ENCODE measurements at regions of chr14 and their contacts with region 1.

Region 1: DNA sequence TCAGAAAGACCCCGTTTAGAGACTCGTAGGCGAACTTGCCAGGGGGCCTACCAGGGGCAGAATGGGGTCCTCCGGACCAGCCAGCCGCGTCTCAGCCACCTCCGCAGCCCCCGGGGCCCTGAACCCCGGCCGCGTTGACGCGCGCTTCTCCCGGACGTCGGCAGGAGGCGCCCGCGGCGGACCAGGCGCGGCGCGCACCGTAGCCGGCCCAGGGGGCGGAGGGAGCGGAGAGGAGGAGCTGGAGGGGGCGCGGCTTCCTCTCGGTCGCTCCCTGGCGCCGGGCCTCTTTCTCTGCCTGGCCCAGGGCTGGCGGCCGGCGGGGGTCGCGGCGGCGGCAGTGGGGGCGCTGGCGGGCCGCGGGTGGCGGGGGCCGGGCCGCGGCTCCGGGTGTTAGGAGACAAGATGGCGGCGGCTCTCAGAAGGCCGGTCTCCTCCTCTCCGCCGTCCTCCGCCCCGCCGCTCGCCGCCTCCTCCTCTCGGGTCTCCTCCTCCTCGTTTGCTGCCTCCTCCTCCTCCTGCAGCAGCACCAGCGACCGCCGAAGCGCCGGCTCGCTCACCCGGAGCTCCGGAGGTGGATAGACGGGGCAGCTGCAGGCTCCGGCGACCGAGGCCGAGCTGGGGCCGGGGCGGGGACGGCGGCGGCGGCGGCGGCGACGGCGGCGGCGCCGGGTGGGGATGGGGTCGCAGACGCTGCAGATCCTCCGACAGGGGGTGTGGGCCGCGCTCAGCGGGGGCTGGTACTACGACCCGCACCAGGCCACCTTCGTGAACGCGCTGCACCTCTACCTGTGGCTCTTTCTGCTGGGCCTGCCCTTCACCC is at the start of gene PCNX1:
- DNase-seq: peak; percentile 95
- ATAC-seq: peak; percentile 82
- H3K4me3 ChIP-seq: peak within 1 kb of the TSS; percentile 76 to 92 (median 84)
- H3K4me3 Mint-ChIP-seq: peak within 1 kb of the TSS; percentile 82
- H3K27ac ChIP-seq: peak within 1 kb of the TSS; percentile 87 to 95
- H3K27ac Mint-ChIP-seq: peak within 1 kb of the TSS; percentile 87
- H3K4me1 ChIP-seq: peaks cover 22 to 25% of the 10 kb centered on the region in 2 donors
- H3K4me1 Mint-ChIP-seq: peaks cover 33% of the 10 kb centered on the region
- H3K27me3 ChIP-seq: no peaks in the 10 kb centered on the region
- H3K27me3 Mint-ChIP-seq: no peaks in the 10 kb centered on the region
- CTCF ChIP-seq: peak; percentile 86
- total RNA-seq, gene PCNX1: 81.1 and 84.5 TPM in 2 replicates

Region 2: GRCh38 chr14:69766984-69767368 is 1140.4 kb before region 1 on chr14 and contains the start of gene SRSF5:
- CTCF ChIA-PET with region 1: no interaction called
- POLR2A ChIA-PET with region 1: no interaction called
- intact Hi-C with region 1: loop called (anchors 5 kb)
- DNase-seq: peak; percentile 98
- ATAC-seq: peak; percentile 80
- H3K4me3 ChIP-seq: peak within 1 kb of the TSS; percentile 97 to 100 (median 99)
- H3K4me3 Mint-ChIP-seq: peak within 1 kb of the TSS; percentile 98
- H3K27ac ChIP-seq: peak within 1 kb of the TSS; percentile 99 to 100
- H3K27ac Mint-ChIP-seq: peak within 1 kb of the TSS; percentile 100
- H3K4me1 ChIP-seq: peaks cover 26 to 27% of the 10 kb centered on the region in 2 donors
- H3K4me1 Mint-ChIP-seq: peaks cover 43% of the 10 kb centered on the region
- H3K27me3 ChIP-seq: no peaks in the 10 kb centered on the region
- H3K27me3 Mint-ChIP-seq: no peaks in the 10 kb centered on the region
- CTCF ChIP-seq: no peak
- total RNA-seq, gene SRSF5: 708 and 768 TPM in 2 replicates

Region 3: GRCh38 chr14:70600382-70601157 is 306.8 kb before region 1 on chr14 and contains the start of gene MED6:
- CTCF ChIA-PET with region 1: interaction called, 3 read pairs
- POLR2A ChIA-PET with region 1: no interaction called
- intact Hi-C with region 1: loop called (anchors 1 kb)
- DNase-seq: peak; percentile 93
- ATAC-seq: peak; percentile 98
- H3K4me3 ChIP-seq: peak within 1 kb of the TSS; percentile 67 to 100 (median 98)
- H3K4me3 Mint-ChIP-seq: peak within 1 kb of the TSS; percentile 99
- H3K27ac ChIP-seq: peak within 1 kb of the TSS; percentile 69 to 94
- H3K27ac Mint-ChIP-seq: peak within 1 kb of the TSS; percentile 97
- H3K4me1 ChIP-seq: peaks cover 25 to 26% of the 10 kb centered on the region in 2 donors
- H3K4me1 Mint-ChIP-seq: peaks cover 27% of the 10 kb centered on the region
- H3K27me3 ChIP-seq: no peaks in the 10 kb centered on the region
- H3K27me3 Mint-ChIP-seq: no peaks in the 10 kb centered on the region
- CTCF ChIP-seq: no peak
- total RNA-seq, gene MED6: 68.3 and 71.0 TPM in 2 replicates

Region 4: GRCh38 chr14:70655110-70655826 is 252.1 kb before region 1 on chr14:
- CTCF ChIA-PET with region 1: no interaction called
- POLR2A ChIA-PET with region 1: no interaction called
- intact Hi-C with region 1: loop called (anchors 5 kb)
- DNase-seq: peak; percentile 88
- ATAC-seq: peak; percentile 83
- H3K4me3 ChIP-seq: peak overlapping the region; percentile 6 to 53 (median 21)
- H3K4me3 Mint-ChIP-seq: peak overlapping the region; percentile 91
- H3K27ac ChIP-seq: peak overlapping the region; percentile 91 to 93
- H3K27ac Mint-ChIP-seq: peak overlapping the region; percentile 98
- H3K4me1 ChIP-seq: peaks cover 82 to 85% of the 10 kb centered on the region in 2 donors
- H3K4me1 Mint-ChIP-seq: peaks cover 83% of the 10 kb centered on the region
- H3K27me3 ChIP-seq: no peaks in the 10 kb centered on the region
- H3K27me3 Mint-ChIP-seq: no peaks in the 10 kb centered on the region
- CTCF ChIP-seq: no peak

Region 5: DNA sequence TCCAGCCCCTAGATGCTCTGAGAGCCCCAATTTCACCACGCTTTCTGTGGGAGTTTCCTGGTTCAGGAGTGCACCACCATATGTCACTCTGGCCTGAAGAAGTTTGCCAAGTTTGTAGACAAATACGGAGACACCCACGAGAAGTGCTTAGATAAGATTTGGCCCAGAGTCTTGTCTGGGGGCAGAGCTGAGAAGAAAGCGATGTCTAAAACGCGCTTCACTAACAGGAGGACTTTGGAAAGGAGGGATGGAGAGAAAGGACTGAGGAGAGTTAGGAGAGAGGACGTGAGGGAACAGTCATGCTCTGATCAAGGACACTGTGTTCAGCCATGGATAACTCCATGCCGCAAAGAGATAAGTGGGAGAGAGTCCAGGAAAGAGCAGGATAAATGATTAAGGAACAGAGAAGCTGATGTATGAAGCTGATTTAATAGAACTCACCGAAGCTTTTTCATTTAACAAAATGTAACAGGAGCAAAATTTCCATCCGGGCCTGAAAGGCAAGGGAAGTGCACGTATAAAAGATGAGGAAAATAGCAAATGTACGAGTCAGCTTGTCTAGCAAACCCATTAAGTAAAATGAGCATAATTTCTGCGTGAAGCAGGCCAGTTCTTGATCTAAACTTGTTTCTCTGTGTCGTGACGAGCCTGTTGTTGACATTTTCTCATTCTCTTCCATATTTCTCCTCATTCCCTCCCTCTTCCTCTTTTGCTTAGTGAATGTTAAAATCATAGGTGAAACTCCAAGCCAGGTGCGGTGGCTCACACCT is 74.7 kb before region 1 on chr14:
- CTCF ChIA-PET with region 1: no interaction called
- POLR2A ChIA-PET with region 1: no interaction called
- intact Hi-C with region 1: no loop called
- DNase-seq: no peak
- ATAC-seq: no peak
- H3K4me3 ChIP-seq: no peak overlapping the region
- H3K4me3 Mint-ChIP-seq: no peak overlapping the region
- H3K27ac ChIP-seq: no peak overlapping the region
- H3K27ac Mint-ChIP-seq: no peak overlapping the region
- H3K4me1 ChIP-seq: no peaks in the 10 kb centered on the region
- H3K4me1 Mint-ChIP-seq: no peaks in the 10 kb centered on the region
- H3K27me3 ChIP-seq: no peaks in the 10 kb centered on the region
- H3K27me3 Mint-ChIP-seq: no peaks in the 10 kb centered on the region
- CTCF ChIP-seq: no peak

Region 6: DNA sequence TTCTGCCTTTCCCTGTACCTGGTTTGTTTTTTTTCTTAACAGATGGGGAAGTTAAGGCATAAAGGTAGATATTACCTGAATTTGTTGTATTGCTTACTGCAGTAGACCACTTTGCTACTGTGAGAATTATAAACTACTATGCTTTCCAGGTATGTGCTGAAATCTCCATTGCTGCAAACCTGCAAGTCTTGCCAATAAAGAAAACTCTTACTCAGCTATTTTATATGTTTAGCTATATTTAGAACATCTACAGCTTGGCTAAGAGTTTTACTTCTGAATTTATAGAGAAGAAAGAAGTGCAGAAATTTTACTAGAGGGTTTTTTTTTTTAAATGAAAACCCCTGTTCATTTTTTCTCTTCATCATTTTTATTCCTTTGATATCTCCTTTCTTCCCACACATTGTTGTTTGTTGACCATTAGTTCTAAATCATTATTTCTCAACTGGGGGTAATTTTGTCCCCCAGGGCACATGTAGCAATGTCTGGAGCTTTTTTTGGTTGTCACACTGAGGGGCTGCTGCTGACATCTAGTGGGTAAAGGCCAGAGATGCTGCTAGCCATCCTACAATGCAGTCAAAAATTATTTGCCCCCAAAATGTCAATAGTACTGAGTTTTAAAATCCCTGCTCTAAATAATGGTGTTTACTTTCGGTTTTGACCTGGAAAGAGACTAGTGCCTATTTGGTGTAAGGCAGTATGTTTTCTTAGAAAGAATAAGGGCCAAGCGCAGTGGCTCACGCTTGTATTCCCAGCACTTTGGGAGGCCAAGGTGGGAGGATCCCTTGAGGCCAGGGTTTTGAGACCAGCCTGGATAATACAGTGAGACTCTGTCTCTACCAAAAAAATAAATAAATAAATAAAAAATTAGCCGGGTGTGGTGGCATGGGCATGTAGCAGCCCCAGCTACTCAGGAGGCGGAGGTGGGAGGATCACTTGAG is 48.4 kb after region 1 on chr14:
- CTCF ChIA-PET with region 1: interaction called, 62 read pairs
- POLR2A ChIA-PET with region 1: no interaction called
- intact Hi-C with region 1: loop called (anchors 1 kb)
- DNase-seq: peak; percentile 38
- ATAC-seq: peak; percentile 39
- H3K4me3 ChIP-seq: no peak overlapping the region
- H3K4me3 Mint-ChIP-seq: no peak overlapping the region
- H3K27ac ChIP-seq: no peak overlapping the region
- H3K27ac Mint-ChIP-seq: no peak overlapping the region
- H3K4me1 ChIP-seq: no peaks in the 10 kb centered on the region
- H3K4me1 Mint-ChIP-seq: peaks cover 4% of the 10 kb centered on the region
- H3K27me3 ChIP-seq: no peaks in the 10 kb centered on the region
- H3K27me3 Mint-ChIP-seq: no peaks in the 10 kb centered on the region
- CTCF ChIP-seq: peak; percentile 57

Region 7: GRCh38 chr14:70972107-70972976 is 65.0 kb after region 1 on chr14:
- CTCF ChIA-PET with region 1: interaction called, 76 read pairs
- POLR2A ChIA-PET with region 1: interaction called, 3 read pairs
- intact Hi-C with region 1: loop called (anchors 1 kb)
- DNase-seq: peak; percentile 87
- ATAC-seq: peak; percentile 75
- H3K4me3 ChIP-seq: no peak overlapping the region
- H3K4me3 Mint-ChIP-seq: no peak overlapping the region
- H3K27ac ChIP-seq: no peak overlapping the region
- H3K27ac Mint-ChIP-seq: no peak overlapping the region
- H3K4me1 ChIP-seq: no peaks in the 10 kb centered on the region
- H3K4me1 Mint-ChIP-seq: peaks cover 1% of the 10 kb centered on the region
- H3K27me3 ChIP-seq: no peaks in the 10 kb centered on the region
- H3K27me3 Mint-ChIP-seq: no peaks in the 10 kb centered on the region
- CTCF ChIP-seq: peak; percentile 94

Region 8: GRCh38 chr14:70999117-70999516 is 91.7 kb after region 1 on chr14:
- CTCF ChIA-PET with region 1: no interaction called
- POLR2A ChIA-PET with region 1: no interaction called
- intact Hi-C with region 1: no loop called
- DNase-seq: no peak
- ATAC-seq: no peak
- H3K4me3 ChIP-seq: no peak overlapping the region
- H3K4me3 Mint-ChIP-seq: no peak overlapping the region
- H3K27ac ChIP-seq: no peak overlapping the region
- H3K27ac Mint-ChIP-seq: no peak overlapping the region
- H3K4me1 ChIP-seq: no peaks in the 10 kb centered on the region
- H3K4me1 Mint-ChIP-seq: peaks cover 2% of the 10 kb centered on the region
- H3K27me3 ChIP-seq: no peaks in the 10 kb centered on the region
- H3K27me3 Mint-ChIP-seq: no peaks in the 10 kb centered on the region
- CTCF ChIP-seq: no peak

Region 9: DNA sequence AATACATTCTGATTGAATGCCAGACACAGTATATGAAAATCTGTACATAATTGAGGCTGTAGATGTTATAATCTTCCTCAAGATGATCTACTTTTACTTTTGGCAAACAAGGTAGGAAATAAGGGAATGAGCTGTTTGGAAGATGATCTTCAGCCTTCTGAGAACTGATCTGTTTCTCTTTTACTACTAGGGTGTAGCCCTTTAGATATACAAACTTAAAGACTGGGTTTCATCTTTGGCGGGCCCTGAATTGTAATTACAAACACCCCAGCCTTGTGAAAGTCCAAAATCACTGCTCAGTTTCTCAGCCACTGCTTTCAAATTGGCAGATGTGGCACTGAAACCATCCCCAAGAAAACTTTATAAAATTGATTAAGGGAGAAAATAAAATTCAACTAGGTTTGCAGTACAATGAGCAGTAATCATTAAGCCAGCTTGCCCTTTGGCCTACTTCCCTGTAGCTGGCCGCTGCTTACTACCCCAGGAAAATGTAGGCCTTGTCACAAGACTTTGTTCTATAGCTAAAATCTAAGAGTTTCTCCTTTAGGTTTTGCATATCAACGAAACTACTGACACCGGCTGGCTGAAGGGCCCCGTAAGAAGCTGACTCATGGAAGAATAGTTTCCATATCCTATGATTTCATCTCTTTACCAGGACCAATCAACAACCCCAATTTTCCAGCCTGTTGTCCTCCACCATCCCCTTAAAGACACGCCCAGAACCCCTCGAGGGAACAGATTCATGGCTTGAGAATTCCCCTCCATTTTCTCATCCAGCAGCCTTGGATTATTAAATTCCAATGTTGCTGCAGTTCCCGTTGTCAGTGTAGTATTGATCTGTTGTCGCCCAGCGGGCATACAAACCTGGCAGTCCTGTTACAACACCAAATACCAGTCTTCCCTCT is 210.7 kb after region 1 on chr14:
- CTCF ChIA-PET with region 1: no interaction called
- POLR2A ChIA-PET with region 1: no interaction called
- intact Hi-C with region 1: no loop called
- DNase-seq: no peak
- ATAC-seq: peak; percentile 37
- H3K4me3 ChIP-seq: no peak overlapping the region
- H3K4me3 Mint-ChIP-seq: no peak overlapping the region
- H3K27ac ChIP-seq: peak overlapping the region in 1 of 2 donors; percentile 78
- H3K27ac Mint-ChIP-seq: peak overlapping the region; percentile 78
- H3K4me1 ChIP-seq: peaks cover 22 to 24% of the 10 kb centered on the region in 2 donors
- H3K4me1 Mint-ChIP-seq: peaks cover 35% of the 10 kb centered on the region
- H3K27me3 ChIP-seq: no peaks in the 10 kb centered on the region
- H3K27me3 Mint-ChIP-seq: no peaks in the 10 kb centered on the region
- CTCF ChIP-seq: no peak